Activated B cell treated with CpG ODN at 0.5 μM for 24 hours (primary cell): ENCODE measurements at regions of chr20 and their contacts with region 1.

Region 1: GRCh38 chr20:5596401-5597193 is 153.6 kb upstream of the SHLD1 start:
- DNase-seq: no peak
- ATAC-seq: no peak
- H3K4me3 Mint-ChIP-seq: no peak overlapping the region
- H3K27ac Mint-ChIP-seq: peak overlapping the region; percentile 32
- H3K4me1 Mint-ChIP-seq: peaks cover 62% of the 10 kb centered on the region
- H3K27me3 Mint-ChIP-seq: no peaks in the 10 kb centered on the region
- CTCF ChIP-seq: no peak

Region 2: DNA sequence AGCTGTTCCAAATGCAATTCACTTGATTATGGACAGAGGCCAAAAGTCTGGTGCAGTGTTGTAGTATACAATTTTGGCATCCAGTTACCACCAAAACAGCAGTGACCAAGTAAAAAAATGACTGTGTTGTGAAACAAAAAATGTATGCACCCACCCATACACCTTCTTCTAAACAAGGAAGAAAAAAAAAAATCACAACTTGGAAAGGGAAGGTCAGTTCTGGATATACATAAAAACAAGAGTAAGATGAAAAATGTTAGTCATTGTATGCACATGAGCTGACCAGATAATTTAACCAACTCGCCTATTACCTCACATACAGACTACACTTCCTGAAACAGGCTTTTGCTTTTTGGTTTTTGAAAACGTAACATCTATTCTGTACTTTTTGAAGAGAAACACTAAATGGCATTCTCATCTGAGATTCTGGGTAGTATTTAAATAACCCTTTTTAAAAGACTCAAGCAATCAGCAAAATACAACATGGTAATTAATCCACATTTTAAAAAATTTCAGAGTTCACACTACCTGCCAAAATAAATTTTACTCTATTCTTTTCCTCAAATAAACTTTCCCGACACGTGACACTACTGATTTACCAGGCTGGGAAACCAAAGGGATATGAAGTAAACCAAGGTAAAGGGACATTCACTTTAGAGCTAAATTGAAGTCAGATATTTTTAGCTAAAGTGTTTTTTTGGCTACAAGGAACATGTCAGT is 12.0 kb after region 1 on chr20:
- CTCF ChIA-PET with region 1: no interaction called
- POLR2A ChIA-PET with region 1: interaction called, 14 read pairs
- intact Hi-C with region 1: loop called (anchors 1 kb)
- DNase-seq: no peak
- ATAC-seq: no peak
- H3K4me3 Mint-ChIP-seq: peak overlapping the region; percentile 99
- H3K27ac Mint-ChIP-seq: peak overlapping the region; percentile 100
- H3K4me1 Mint-ChIP-seq: peaks cover 67% of the 10 kb centered on the region
- H3K27me3 Mint-ChIP-seq: no peaks in the 10 kb centered on the region
- CTCF ChIP-seq: no peak

Region 3: GRCh38 chr20:5674176-5674660 is 77.6 kb after region 1 on chr20:
- CTCF ChIA-PET with region 1: no interaction called
- POLR2A ChIA-PET with region 1: no interaction called
- intact Hi-C with region 1: loop called (anchors 5 kb)
- DNase-seq: no peak
- ATAC-seq: peak; percentile 87
- H3K4me3 Mint-ChIP-seq: peak overlapping the region; percentile 13
- H3K27ac Mint-ChIP-seq: peak overlapping the region; percentile 77
- H3K4me1 Mint-ChIP-seq: peaks cover 30% of the 10 kb centered on the region
- H3K27me3 Mint-ChIP-seq: no peaks in the 10 kb centered on the region
- CTCF ChIP-seq: no peak